ENCODE measurements at regions of chr5 and their contacts with region 1.

Region 1: DNA sequence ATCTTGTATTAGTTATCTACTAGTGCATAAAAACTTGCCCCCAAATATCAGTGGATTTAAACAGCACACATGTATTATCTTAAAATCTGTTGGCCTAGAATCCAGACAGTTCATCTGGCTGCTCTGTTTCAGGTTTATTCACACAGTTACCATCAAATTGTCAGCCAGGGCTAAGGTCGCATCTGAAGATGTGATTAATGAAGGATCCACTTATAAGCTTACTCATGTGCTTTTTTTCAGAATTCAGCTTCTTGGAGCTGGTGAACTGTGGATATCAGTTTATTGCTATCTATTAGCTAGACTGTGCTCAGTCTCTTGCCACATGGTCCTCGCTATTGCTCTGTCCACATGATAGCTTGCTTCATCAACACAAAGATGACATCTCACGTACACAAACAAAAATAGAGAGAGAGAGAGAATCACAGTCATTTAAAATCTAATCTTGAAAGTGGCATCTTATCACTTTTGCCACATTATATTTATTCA is 81.5 kb downstream of the PRDM9 start:
- DNase-seq: no peak
- ATAC-seq: no peak
- H3K4me3 ChIP-seq: no peak overlapping the region
- H3K27ac ChIP-seq: no peak overlapping the region
- H3K4me1 ChIP-seq: no peaks in the 10 kb centered on the region
- H3K27me3 ChIP-seq: no peaks in the 10 kb centered on the region
- CTCF ChIP-seq: no peak
- EP300 ChIP-seq: no peak
- POLR2A ChIP-seq: no peak
- RAD21 ChIP-seq: no peak

Region 2: GRCh38 chr5:22734910-22735309 is 854.0 kb before region 1 on chr5:
- CTCF ChIA-PET with region 1: no interaction called
- POLR2A ChIA-PET with region 1: no interaction called
- in situ Hi-C with region 1: no loop called
- intact Hi-C with region 1: loop called (anchors 5 kb)
- DNase-seq: no peak
- ATAC-seq: no peak
- H3K4me3 ChIP-seq: no peak overlapping the region
- H3K27ac ChIP-seq: no peak overlapping the region
- H3K4me1 ChIP-seq: no peaks in the 10 kb centered on the region
- H3K27me3 ChIP-seq: no peaks in the 10 kb centered on the region
- CTCF ChIP-seq: no peak
- EP300 ChIP-seq: no peak
- POLR2A ChIP-seq: no peak
- RAD21 ChIP-seq: no peak

Measured in K562 (cell line).